Posterior cingulate gyrus (tissue), 11 donors: ENCODE measurements at regions of chr11 and their contacts with region 1.

Region 1: DNA sequence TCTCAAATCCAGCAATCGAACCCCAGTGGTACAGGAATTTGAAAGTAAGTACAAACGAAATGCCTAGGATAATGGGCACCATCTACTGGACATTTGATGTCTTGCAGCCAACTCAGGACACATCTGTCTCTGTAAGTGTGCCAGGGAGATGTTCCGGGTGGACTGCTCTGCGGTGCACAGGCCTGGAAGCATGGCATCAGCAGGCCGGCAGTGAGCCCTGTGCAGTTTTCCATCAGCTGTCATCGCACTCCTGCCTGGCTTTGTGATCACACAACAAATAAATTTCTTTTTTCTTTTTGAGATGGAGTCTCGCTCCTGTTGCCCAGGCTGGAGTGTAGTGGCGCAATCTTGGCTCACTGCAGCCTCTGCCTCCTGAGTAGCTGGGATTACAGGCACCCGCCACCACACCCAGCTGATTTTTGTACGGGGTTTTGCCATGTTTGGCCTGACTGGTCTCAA is 71.0 kb downstream of the JAM3 start:
- DNase-seq: peak in 9 of 10 donors; percentile 46 to 95 (median 76)

Region 2: GRCh38 chr11:133927690-133928627 is 211.9 kb before region 1 on chr11:
- intact Hi-C with region 1: loop called (anchors 5 kb)
- DNase-seq: peak; percentile 54 to 97 (median 76)